ENCODE measurements at regions of chr20 and their contacts with region 1.

Region 1: GRCh38 chr20:51372176-51372803 is 170.2 kb downstream of the NFATC2 start:
- H3K4me3 Mint-ChIP-seq: no peak overlapping the region
- H3K27ac Mint-ChIP-seq: no peak overlapping the region
- H3K4me1 Mint-ChIP-seq: no peaks in the 10 kb centered on the region
- H3K27me3 Mint-ChIP-seq: peaks cover 5% of the 10 kb centered on the region

Region 2: GRCh38 chr20:51595058-51595532 is 222.8 kb after region 1 on chr20:
- intact Hi-C with region 1: loop called (anchors 1 kb)
- H3K4me3 Mint-ChIP-seq: peak overlapping the region; percentile 2
- H3K27ac Mint-ChIP-seq: no peak overlapping the region
- H3K4me1 Mint-ChIP-seq: peaks cover 10% of the 10 kb centered on the region
- H3K27me3 Mint-ChIP-seq: peaks cover 9% of the 10 kb centered on the region

Region 3: GRCh38 chr20:51624157-51624731 is 252.0 kb after region 1 on chr20:
- intact Hi-C with region 1: loop called (anchors 1 kb)
- H3K4me3 Mint-ChIP-seq: no peak overlapping the region
- H3K27ac Mint-ChIP-seq: no peak overlapping the region
- H3K4me1 Mint-ChIP-seq: peaks cover 6% of the 10 kb centered on the region
- H3K27me3 Mint-ChIP-seq: peaks cover 34% of the 10 kb centered on the region